ENCODE measurements at regions of chr15 and their contacts with region 1.

Region 1: DNA sequence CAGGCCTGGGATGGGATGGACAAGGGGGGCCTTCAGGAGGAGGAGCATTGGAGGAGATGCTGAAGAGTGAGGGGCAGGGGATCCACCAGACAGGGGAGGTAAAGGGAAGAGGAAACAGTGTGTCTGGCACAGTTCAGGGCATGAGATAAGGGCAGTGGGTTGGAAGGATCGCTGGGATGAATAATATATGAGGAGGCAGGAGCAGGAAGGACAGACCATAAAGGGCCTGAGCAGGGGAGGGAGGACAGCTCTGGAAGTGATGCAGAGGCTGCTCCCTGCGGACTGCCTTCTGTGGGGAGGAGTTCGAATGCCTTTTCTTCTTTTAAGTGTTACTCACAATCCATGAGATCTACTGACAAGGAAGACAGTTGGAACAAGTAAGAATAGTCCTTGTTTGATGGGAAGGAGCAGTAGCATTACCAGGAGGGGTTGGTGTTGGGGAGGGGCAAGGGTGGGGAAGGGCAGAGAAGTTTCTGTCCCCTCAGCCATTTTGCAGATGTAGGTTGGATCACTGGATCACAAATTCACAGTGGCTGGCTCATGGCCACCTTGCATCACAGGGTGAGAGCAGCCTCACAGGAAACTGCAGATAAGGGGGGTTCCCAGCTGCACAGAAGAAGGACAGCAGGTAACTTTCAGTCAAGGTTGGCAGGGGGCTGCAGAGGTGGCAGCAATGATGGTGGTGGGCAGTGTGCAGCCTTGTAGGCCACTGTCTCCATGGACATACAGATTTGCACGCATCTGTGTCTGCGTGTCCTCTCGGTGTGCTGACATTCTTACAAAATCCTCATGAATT is 91.9 kb upstream of the SNRPN start:
- DNase-seq: no peak
- ATAC-seq: peak; percentile 29
- H3K4me3 Mint-ChIP-seq: no peak overlapping the region
- H3K27ac Mint-ChIP-seq: peak overlapping the region; percentile 86
- H3K4me1 Mint-ChIP-seq: peaks cover 41% of the 10 kb centered on the region
- H3K27me3 Mint-ChIP-seq: no peaks in the 10 kb centered on the region
- CTCF ChIP-seq: no peak

Region 2: GRCh38 chr15:24848050-24848449 is 14.9 kb before region 1 on chr15:
- CTCF ChIA-PET with region 1: no interaction called
- POLR2A ChIA-PET with region 1: no interaction called
- DNase-seq: peak; percentile 42
- ATAC-seq: peak; percentile 77
- H3K4me3 Mint-ChIP-seq: peak overlapping the region; percentile 53
- H3K27ac Mint-ChIP-seq: peak overlapping the region; percentile 95
- H3K4me1 Mint-ChIP-seq: peaks cover 22% of the 10 kb centered on the region
- H3K27me3 Mint-ChIP-seq: no peaks in the 10 kb centered on the region; the same call in 1 of the 2 replicates
- CTCF ChIP-seq: no peak

Region 3: GRCh38 chr15:25237291-25237978 is 374.5 kb after region 1 on chr15:
- CTCF ChIA-PET with region 1: no interaction called
- POLR2A ChIA-PET with region 1: interaction called, 11 read pairs
- DNase-seq: no peak
- ATAC-seq: no peak
- H3K4me3 Mint-ChIP-seq: no peak overlapping the region
- H3K27ac Mint-ChIP-seq: no peak overlapping the region
- H3K4me1 Mint-ChIP-seq: no peaks in the 10 kb centered on the region
- H3K27me3 Mint-ChIP-seq: no peaks in the 10 kb centered on the region
- CTCF ChIP-seq: no peak

Measured in WTC11 (cell line).